ENCODE measurements at regions of chr2 and their contacts with region 1.

Region 1: GRCh38 chr2:127479219-127479825 is 47.0 kb downstream of the IWS1 start:
- DNase-seq: peak; percentile 75
- H3K4me3 ChIP-seq: no peak overlapping the region
- H3K27ac ChIP-seq: no peak overlapping the region
- H3K4me1 ChIP-seq: no peaks in the 10 kb centered on the region
- H3K27me3 ChIP-seq: no peaks in the 10 kb centered on the region
- CTCF ChIP-seq: peak; percentile 76

Region 2: GRCh38 chr2:127324635-127325034 is 154.7 kb before region 1 on chr2:
- CTCF ChIA-PET with region 1: interaction called, 10 read pairs
- POLR2A ChIA-PET with region 1: no interaction called
- intact Hi-C with region 1: loop called (anchors 1 kb)
- DNase-seq: peak; percentile 66
- H3K4me3 ChIP-seq: no peak overlapping the region
- H3K27ac ChIP-seq: no peak overlapping the region
- H3K4me1 ChIP-seq: no peaks in the 10 kb centered on the region
- H3K27me3 ChIP-seq: no peaks in the 10 kb centered on the region
- CTCF ChIP-seq: peak; percentile 78

Region 3: GRCh38 chr2:127498386-127498785 is 19.1 kb after region 1 on chr2:
- CTCF ChIA-PET with region 1: no interaction called
- POLR2A ChIA-PET with region 1: no interaction called
- intact Hi-C with region 1: loop called (anchors 1 kb)
- DNase-seq: no peak
- H3K4me3 ChIP-seq: no peak overlapping the region
- H3K27ac ChIP-seq: no peak overlapping the region
- H3K4me1 ChIP-seq: no peaks in the 10 kb centered on the region
- H3K27me3 ChIP-seq: no peaks in the 10 kb centered on the region
- CTCF ChIP-seq: no peak

Measured in A673 (cell line).